ENCODE measurements at regions of chr4 and their contacts with region 1.

Region 1: DNA sequence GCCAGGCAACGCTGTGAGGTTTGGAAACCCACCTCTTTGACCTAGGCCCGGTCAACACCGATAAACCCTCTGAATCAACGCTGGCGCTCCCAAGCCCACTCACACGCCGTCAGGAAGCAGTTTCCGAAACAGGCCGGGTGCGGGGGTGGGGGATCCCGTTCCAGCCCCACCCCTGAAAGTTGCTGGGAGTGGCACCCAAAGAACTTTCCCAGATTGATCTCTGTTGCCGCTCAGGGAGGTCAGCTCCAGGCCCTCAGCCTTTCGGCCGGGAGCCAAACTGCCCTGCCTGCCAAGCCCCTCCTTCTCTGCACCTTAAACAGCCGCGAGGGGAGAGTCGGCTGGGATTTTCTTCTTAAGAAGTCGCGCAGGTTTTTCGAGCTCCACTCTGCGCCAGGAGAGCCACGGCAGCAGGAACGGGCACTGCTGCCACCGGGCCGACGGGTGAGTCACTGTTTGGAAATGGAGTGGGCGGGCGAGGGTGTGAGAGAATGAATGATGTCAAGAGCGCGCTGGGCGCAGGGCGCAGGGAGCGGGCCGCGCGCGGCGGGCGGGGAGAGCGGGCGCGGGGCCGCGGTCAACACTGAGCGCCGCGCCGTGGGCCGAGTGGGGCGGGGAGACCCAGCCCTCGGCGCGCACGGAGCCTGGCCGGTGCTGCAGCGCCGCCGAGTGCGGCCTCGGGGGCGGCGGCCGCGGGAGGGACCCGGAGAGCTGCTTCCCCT is at the start of gene SGMS2:
- DNase-seq: peak; percentile 88
- H3K4me3 Mint-ChIP-seq: peak within 1 kb of the TSS; percentile 82
- H3K27ac Mint-ChIP-seq: peak within 1 kb of the TSS; percentile 96
- H3K4me1 Mint-ChIP-seq: peaks cover 24% of the 10 kb centered on the region
- H3K27me3 Mint-ChIP-seq: no peaks in the 10 kb centered on the region
- CTCF ChIP-seq: no peak
- total RNA-seq, gene SGMS2: 67.2 and 74.7 TPM in 2 replicates

Region 2: GRCh38 chr4:107757864-107758476 is 66.5 kb before region 1 on chr4:
- CTCF ChIA-PET with region 1: interaction called, 4 read pairs
- intact Hi-C with region 1: loop called (anchors 1 kb)
- DNase-seq: no peak
- H3K4me3 Mint-ChIP-seq: no peak overlapping the region
- H3K27ac Mint-ChIP-seq: no peak overlapping the region
- H3K4me1 Mint-ChIP-seq: no peaks in the 10 kb centered on the region
- H3K27me3 Mint-ChIP-seq: no peaks in the 10 kb centered on the region
- CTCF ChIP-seq: no peak

Region 3: DNA sequence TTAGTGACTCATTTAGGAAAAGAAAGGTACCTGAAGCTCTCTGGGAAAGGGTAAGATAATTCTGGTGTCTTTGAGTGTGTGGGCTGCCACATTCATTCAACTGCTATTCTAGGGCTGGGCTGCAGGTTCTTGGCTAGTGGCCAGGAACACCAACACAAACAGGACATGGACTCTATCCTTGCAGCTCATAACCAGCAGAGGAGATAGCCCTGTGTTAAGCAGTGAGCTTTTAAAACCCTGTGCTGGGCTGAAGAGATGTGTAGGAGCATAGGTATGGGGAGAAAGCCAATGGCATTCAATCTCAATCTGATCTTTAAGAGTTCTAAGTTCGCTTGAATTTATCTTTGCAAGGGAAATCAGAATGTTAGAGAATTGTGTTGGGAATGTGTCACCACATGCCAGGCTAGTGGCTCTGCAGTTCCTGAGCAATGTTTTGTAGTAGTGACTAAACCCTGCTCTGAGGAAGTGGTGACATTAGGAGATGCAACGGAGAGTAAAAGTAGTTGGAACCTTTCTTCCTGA is 39.4 kb after region 1 on chr4:
- CTCF ChIA-PET with region 1: interaction called, 4 read pairs
- intact Hi-C with region 1: loop called (anchors 2 kb)
- DNase-seq: peak; percentile 45
- H3K4me3 Mint-ChIP-seq: no peak overlapping the region
- H3K27ac Mint-ChIP-seq: peak overlapping the region; percentile 98
- H3K4me1 Mint-ChIP-seq: peaks cover 25% of the 10 kb centered on the region
- H3K27me3 Mint-ChIP-seq: no peaks in the 10 kb centered on the region
- CTCF ChIP-seq: no peak

Region 4: GRCh38 chr4:107896158-107897045 is 71.9 kb after region 1 on chr4:
- CTCF ChIA-PET with region 1: interaction called, 5 read pairs
- intact Hi-C with region 1: loop called (anchors 5 kb)
- DNase-seq: peak; percentile 52
- H3K4me3 Mint-ChIP-seq: peak overlapping the region; percentile 43
- H3K27ac Mint-ChIP-seq: peak overlapping the region; percentile 91
- H3K4me1 Mint-ChIP-seq: peaks cover 39% of the 10 kb centered on the region
- H3K27me3 Mint-ChIP-seq: no peaks in the 10 kb centered on the region
- CTCF ChIP-seq: no peak

Region 5: GRCh38 chr4:107913281-107913899 is 88.9 kb after region 1 on chr4:
- CTCF ChIA-PET with region 1: no interaction called
- intact Hi-C with region 1: loop called (anchors 5 kb)
- DNase-seq: peak; percentile 51
- H3K4me3 Mint-ChIP-seq: no peak overlapping the region
- H3K27ac Mint-ChIP-seq: no peak overlapping the region
- H3K4me1 Mint-ChIP-seq: no peaks in the 10 kb centered on the region
- H3K27me3 Mint-ChIP-seq: no peaks in the 10 kb centered on the region
- CTCF ChIP-seq: peak; percentile 32

Measured in Calu3 (cell line).